K562 (cell line): ENCODE measurements at regions of chr11 and their contacts with region 1.

Region 1: DNA sequence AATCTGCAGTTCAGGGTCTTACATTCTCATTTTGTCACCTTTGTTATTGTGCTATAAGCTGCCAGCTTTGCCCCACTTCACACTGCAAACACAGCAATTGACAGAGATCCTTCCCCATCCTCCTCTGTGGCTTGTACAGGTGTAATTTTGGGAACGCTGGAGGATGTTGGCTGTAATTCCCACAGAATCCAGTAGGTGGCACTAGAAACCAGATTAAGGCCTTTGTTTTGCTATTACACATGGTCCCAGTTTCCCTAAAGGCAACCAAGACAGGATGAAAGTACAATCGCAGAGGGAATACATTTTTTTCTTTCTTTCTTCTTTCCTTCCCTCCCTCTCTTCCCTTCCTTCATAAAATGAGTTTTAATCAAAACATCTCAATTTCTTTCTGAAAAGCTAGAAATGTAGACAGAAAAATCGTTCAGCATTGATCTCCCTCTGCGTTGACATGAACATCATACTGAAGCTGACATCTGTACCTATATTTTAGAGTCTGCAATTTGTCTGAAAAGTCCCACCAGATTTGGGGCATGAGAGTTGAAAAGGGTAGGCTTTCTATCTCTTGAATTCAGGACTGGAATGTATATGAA is 21.3 kb upstream of the NELL1 start:
- DNase-seq: peak; percentile 64 to 69 (median 66)
- ATAC-seq: peak; percentile 86
- H3K4me3 ChIP-seq: no peak overlapping the region
- H3K27ac ChIP-seq: no peak overlapping the region
- H3K4me1 ChIP-seq: no peaks in the 10 kb centered on the region
- H3K27me3 ChIP-seq: no peaks in the 10 kb centered on the region; a peak in 1 of 5 replicates
- CTCF ChIP-seq: peak; percentile 63 to 85 (median 83)
- EP300 ChIP-seq: no peak
- POLR2A ChIP-seq: no peak
- RAD21 ChIP-seq: peak; percentile 79 to 88

Region 2: GRCh38 chr11:20873054-20873453 is 225.0 kb after region 1 on chr11:
- CTCF ChIA-PET with region 1: interaction called, 3 read pairs
- POLR2A ChIA-PET with region 1: no interaction called
- in situ Hi-C with region 1: no loop called
- intact Hi-C with region 1: loop called (anchors 2 kb)
- DNase-seq: peak; percentile 9 to 32 (median 18)
- ATAC-seq: 0 out of 3 replicates have a peak, but pooled peaks have one; percentile 27
- H3K4me3 ChIP-seq: no peak overlapping the region
- H3K27ac ChIP-seq: no peak overlapping the region
- H3K4me1 ChIP-seq: no peaks in the 10 kb centered on the region
- H3K27me3 ChIP-seq: no peaks in the 10 kb centered on the region
- CTCF ChIP-seq: peak; percentile 12 to 26 (median 21); a peak in 3 of 6 replicates
- EP300 ChIP-seq: no peak
- POLR2A ChIP-seq: no peak
- RAD21 ChIP-seq: peak in 1 of 2 experiments; percentile 26; a peak in 2 of 4 replicates

Region 3: GRCh38 chr11:21511835-21512440 is 863.9 kb after region 1 on chr11:
- CTCF ChIA-PET with region 1: no interaction called
- POLR2A ChIA-PET with region 1: no interaction called
- in situ Hi-C with region 1: loop called (anchors 10 kb)
- intact Hi-C with region 1: loop called (anchors 1 kb)
- DNase-seq: peak; percentile 28 to 44 (median 29)
- ATAC-seq: peak; percentile 46; the same call in 1 of the 3 replicates
- H3K4me3 ChIP-seq: no peak overlapping the region
- H3K27ac ChIP-seq: no peak overlapping the region
- H3K4me1 ChIP-seq: no peaks in the 10 kb centered on the region
- H3K27me3 ChIP-seq: no peaks in the 10 kb centered on the region
- CTCF ChIP-seq: peak; percentile 26 to 44 (median 43); a peak in 4 of 6 replicates
- EP300 ChIP-seq: no peak
- POLR2A ChIP-seq: no peak
- RAD21 ChIP-seq: peak in 1 of 2 experiments; percentile 42; a peak in 3 of 4 replicates

Region 4: GRCh38 chr11:22304337-22304961 is 1656.4 kb after region 1 on chr11:
- CTCF ChIA-PET with region 1: no interaction called
- POLR2A ChIA-PET with region 1: no interaction called
- in situ Hi-C with region 1: loop called (anchors 25 kb)
- intact Hi-C with region 1: loop called (anchors 5 kb)
- DNase-seq: peak; percentile 20 to 32 (median 24)
- ATAC-seq: no peak
- H3K4me3 ChIP-seq: no peak overlapping the region
- H3K27ac ChIP-seq: no peak overlapping the region
- H3K4me1 ChIP-seq: no peaks in the 10 kb centered on the region
- H3K27me3 ChIP-seq: no peaks in the 10 kb centered on the region
- CTCF ChIP-seq: peak; percentile 21 to 69 (median 41); a peak in 5 of 6 replicates
- EP300 ChIP-seq: no peak
- POLR2A ChIP-seq: no peak
- RAD21 ChIP-seq: peak; percentile 77 to 79